ENCODE measurements at regions of chr10 and their contacts with region 1.

Region 1: DNA sequence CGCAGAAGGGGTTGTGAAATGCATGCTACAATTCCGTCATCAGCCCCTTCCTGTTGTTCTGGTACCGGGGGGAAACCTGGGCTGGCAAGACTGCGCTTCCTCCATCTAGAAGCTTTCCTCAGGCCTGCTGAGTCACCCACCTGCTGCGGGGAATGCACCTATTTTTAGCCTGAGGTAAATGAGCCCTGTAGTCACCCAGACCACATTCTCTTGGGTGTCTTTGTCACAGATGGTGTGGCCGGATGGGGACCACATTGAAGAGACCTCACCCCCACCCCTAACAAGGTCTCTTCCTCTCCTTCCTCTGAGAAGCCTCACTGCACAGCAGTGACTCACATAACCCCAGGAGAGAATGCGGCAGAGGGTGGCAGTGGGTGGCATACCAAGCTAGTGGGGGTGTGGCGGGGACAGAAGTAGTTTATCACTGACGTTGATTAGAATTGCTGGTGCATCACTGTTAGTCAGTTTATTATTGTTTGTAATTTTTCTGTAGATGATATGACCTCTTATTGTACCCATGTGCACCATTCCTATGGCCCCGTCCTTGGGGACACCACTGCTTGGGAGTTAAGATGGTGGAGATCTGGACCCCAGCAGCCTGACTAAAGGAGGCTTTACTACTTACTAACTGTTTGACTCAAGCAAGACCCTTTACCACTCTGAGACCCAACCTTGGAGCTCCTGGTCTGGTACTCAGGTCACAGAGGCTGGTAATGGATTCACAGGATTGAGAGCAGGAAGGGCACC is 83.0 kb upstream of the DUSP5 start:
- DNase-seq: peak; percentile 77 to 96 (median 86)
- H3K4me3 ChIP-seq: no peak overlapping the region
- H3K4me3 Mint-ChIP-seq: peak overlapping the region; percentile 6 to 84 (median 45)
- H3K27ac ChIP-seq: no peak overlapping the region
- H3K27ac Mint-ChIP-seq: peak overlapping the region; percentile 49 to 94 (median 91)
- H3K4me1 ChIP-seq: peaks cover 36% of the 10 kb centered on the region
- H3K4me1 Mint-ChIP-seq: peaks cover 45 to 52% (median 52%) of the 10 kb centered on the region in 3 donors
- H3K27me3 ChIP-seq: no peaks in the 10 kb centered on the region
- H3K27me3 Mint-ChIP-seq: no peaks in the 10 kb centered on the region

Region 2: DNA sequence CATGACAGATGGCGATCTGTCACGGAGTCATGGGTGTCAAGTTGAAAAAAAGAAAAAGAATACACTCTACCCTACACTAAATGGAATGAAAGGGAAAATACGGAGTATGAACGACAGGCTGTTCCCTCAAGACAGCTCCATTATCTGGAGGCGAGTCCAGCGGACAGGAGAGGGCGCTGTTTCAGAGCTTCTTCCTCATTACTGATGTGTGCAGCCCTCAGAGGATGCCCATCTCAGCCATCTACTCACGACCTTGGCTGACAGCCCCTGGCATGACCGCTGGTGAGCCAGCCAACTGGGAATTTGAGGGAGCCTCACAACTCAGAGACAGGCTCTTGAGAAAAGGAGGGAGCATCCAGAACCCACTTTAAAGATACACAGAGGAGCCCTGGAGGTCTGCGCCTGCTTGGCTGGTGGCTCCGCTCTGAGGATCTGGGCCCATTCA is 60.4 kb before region 1 on chr10:
- CTCF ChIA-PET with region 1: interaction called, 11 read pairs
- POLR2A ChIA-PET with region 1: interaction called, 6 read pairs
- DNase-seq: peak; percentile 43 to 84 (median 64)
- H3K4me3 ChIP-seq: no peak overlapping the region
- H3K4me3 Mint-ChIP-seq: peak overlapping the region in 6 of 7 donors; percentile 17 to 76 (median 45)
- H3K27ac ChIP-seq: no peak overlapping the region
- H3K27ac Mint-ChIP-seq: peak overlapping the region in 7 of 8 donors; percentile 35 to 99 (median 85)
- H3K4me1 ChIP-seq: peaks cover 48% of the 10 kb centered on the region
- H3K4me1 Mint-ChIP-seq: peaks cover 54 to 55% (median 54%) of the 10 kb centered on the region in 3 donors
- H3K27me3 ChIP-seq: no peaks in the 10 kb centered on the region
- H3K27me3 Mint-ChIP-seq: no peaks in the 10 kb centered on the region

Measured in CD8-positive, alpha-beta memory T cell (primary cell).